ENCODE measurements at regions of chr3 and their contacts with region 1.

Region 1: GRCh38 chr3:148534089-148534988 is 163.4 kb upstream of the AGTR1 start:
- DNase-seq: no peak
- ATAC-seq: no peak
- H3K4me3 ChIP-seq: no peak overlapping the region
- H3K27ac ChIP-seq: no peak overlapping the region
- H3K4me1 ChIP-seq: no peaks in the 10 kb centered on the region
- H3K27me3 ChIP-seq: no peaks in the 10 kb centered on the region
- CTCF ChIP-seq: no peak
- POLR2A ChIP-seq: no peak

Region 2: DNA sequence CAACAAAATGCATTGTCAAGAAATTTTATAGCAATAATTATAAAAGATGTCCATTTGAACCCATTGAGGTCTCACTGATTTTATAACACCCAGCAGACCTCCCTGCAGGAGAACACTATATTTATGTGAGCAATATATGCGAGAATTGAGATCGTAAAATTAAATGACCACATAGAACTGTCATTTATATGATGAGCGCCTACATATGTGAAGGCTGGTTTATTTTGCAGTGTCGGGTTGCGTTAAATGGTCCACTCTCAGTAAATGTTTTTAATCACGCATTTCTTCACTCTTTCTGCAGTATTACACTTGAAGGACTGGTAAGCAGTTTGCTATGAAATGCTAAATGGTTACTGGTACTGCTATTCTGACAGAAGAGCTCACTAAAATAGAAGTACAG is 245.2 kb before region 1 on chr3:
- in situ Hi-C with region 1: no loop called
- intact Hi-C with region 1: no loop called
- DNase-seq: no peak
- ATAC-seq: no peak
- H3K4me3 ChIP-seq: no peak overlapping the region
- H3K27ac ChIP-seq: no peak overlapping the region
- H3K4me1 ChIP-seq: no peaks in the 10 kb centered on the region
- H3K27me3 ChIP-seq: no peaks in the 10 kb centered on the region
- CTCF ChIP-seq: no peak
- POLR2A ChIP-seq: no peak

Region 3: GRCh38 chr3:148513167-148513566 is 21.2 kb before region 1 on chr3:
- in situ Hi-C with region 1: no loop called
- intact Hi-C with region 1: loop called (anchors 1 kb)
- DNase-seq: no peak
- ATAC-seq: no peak
- H3K4me3 ChIP-seq: no peak overlapping the region
- H3K27ac ChIP-seq: no peak overlapping the region
- H3K4me1 ChIP-seq: no peaks in the 10 kb centered on the region
- H3K27me3 ChIP-seq: no peaks in the 10 kb centered on the region
- CTCF ChIP-seq: no peak
- POLR2A ChIP-seq: no peak

Measured in gastrocnemius medialis (tissue), 4 donors.